Gastrocnemius medialis (tissue), 4 donors: ENCODE measurements at regions of chr6 and their contacts with region 1.

Region 1: GRCh38 chr6:32868257-32868788 is 14.3 kb downstream of the PSMB9 start:
- DNase-seq: peak; percentile 46 to 55
- ATAC-seq: peak; percentile 60 to 86
- H3K4me3 ChIP-seq: no peak overlapping the region
- H3K27ac ChIP-seq: no peak overlapping the region
- H3K4me1 ChIP-seq: no peaks in the 10 kb centered on the region
- H3K27me3 ChIP-seq: no peaks in the 10 kb centered on the region
- CTCF ChIP-seq: peak; percentile 88 to 95 (median 91)
- POLR2A ChIP-seq: no peak

Region 2: GRCh38 chr6:32413427-32414047 is 454.8 kb before region 1 on chr6:
- in situ Hi-C with region 1: no loop called
- intact Hi-C with region 1: loop called (anchors 5 kb)
- DNase-seq: peak; percentile 42 to 46
- ATAC-seq: peak; percentile 45 to 71
- H3K4me3 ChIP-seq: no peak overlapping the region
- H3K27ac ChIP-seq: no peak overlapping the region
- H3K4me1 ChIP-seq: peaks cover 0 to 3% of the 10 kb centered on the region in 2 donors
- H3K27me3 ChIP-seq: peaks cover 0 to 11% (median 6%) of the 10 kb centered on the region in 3 donors
- CTCF ChIP-seq: peak; percentile 64 to 94 (median 85)
- POLR2A ChIP-seq: no peak

Region 3: GRCh38 chr6:32825966-32826365 is 42.4 kb before region 1 on chr6:
- in situ Hi-C with region 1: loop called in 1 of 4 experiments (anchors 5 kb)
- intact Hi-C with region 1: loop called (anchors 5 kb)
- DNase-seq: no peak
- ATAC-seq: peak; percentile 56 to 81
- H3K4me3 ChIP-seq: no peak overlapping the region
- H3K27ac ChIP-seq: peak overlapping the region in 3 of 4 donors; percentile 3 to 27 (median 21)
- H3K4me1 ChIP-seq: no peaks in the 10 kb centered on the region
- H3K27me3 ChIP-seq: no peaks in the 10 kb centered on the region
- CTCF ChIP-seq: peak in 4 of 5 experiments; percentile 23 to 47 (median 30)
- POLR2A ChIP-seq: no peak

Region 4: DNA sequence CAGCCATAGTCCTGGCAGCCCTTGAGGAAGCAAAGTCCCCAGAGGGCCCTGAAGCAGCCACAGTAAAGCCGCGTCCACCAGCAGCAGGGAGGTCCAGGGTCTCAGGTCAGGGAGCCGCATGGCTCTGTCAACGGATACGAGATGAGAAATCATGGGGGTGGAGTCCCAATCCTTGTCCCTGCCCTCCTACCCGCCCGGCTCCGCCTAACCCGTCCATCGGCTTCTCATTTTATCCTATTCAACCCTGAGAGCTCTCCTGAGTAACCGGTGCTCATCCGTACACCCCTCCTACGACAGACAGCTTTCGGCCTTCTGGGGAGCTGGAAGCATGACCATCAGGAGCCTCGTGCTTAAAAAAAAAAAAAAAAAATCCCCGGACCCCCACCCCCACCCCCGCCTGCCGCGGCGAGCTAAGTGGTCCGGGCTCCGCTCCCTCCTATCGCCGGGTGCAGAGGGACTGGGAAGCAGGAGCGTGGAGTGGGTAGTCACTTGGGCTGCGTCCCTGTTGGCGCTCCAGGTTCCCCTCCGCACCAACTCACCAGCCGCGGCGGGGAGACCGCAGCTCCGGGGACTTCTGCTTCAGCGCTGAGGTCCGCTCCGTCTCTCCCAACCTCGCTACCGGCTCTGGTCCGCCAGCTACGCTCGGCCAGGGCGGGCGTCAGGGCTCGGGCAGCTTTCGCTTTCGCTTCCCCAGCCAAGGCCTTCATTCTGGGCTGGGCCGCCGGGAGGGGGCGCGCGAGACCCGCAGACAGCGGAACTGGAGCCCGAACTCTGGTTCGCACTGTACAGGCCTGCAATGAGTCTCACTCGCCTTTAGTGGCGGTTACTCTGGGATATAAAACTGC is 30.0 kb before region 1 on chr6 and contains the start of gene TAP2:
- in situ Hi-C with region 1: loop called in 1 of 4 experiments (anchors 5 kb)
- intact Hi-C with region 1: loop called (anchors 1 kb)
- DNase-seq: peak; percentile 87 to 92
- ATAC-seq: peak; percentile 91 to 95
- H3K4me3 ChIP-seq: peak within 1 kb of the TSS; percentile 66 to 86 (median 80)
- H3K27ac ChIP-seq: peak within 1 kb of the TSS; percentile 84 to 90 (median 90)
- H3K4me1 ChIP-seq: peaks cover 7% of the 10 kb centered on the region in 2 donors
- H3K27me3 ChIP-seq: no peaks in the 10 kb centered on the region
- CTCF ChIP-seq: peak; percentile 97 to 98 (median 98)
- POLR2A ChIP-seq: peak; percentile 24 to 44
- total RNA-seq, gene TAP2: 2.5 to 7.1 (median 4.1) TPM

Region 5: DNA sequence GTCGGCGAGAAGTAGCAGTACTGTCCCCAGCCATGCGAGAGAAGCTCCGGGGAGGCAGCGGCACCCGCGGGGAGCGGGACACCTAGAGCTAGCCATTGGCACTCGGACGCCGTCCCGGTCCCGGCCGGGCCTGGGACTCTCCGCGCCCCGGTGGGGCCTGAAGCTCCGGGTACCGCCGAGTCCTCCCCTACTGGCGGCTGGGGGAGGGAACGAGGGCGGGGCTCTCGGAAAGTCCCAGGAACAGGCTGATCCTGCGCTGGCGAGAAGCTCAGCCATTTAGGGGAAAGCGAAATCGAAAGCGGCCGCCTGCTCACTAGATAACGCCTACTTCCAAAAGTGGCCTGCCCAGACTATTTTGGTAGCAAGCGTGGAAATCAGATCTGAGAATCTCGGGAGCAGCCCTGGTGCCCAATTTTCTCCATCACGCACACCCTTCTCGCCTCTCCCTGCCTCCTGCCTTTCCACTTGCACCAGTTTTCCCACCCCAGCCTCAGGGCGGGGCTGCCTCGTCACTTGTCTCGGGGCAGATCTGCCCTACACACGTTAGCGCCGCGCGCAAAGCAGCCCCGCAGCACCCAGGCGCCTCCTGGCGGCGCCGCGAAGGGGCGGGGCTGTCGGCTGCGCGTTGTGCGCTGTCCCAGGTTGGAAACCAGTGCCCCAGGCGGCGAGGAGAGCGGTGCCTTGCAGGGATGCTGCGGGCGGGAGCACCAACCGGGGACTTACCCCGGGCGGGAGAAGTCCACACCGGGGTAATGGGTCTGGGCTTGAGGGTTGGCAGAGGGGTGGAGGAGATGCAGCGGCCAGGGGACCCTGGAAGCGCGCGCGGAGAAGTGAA is 14.6 kb before region 1 on chr6 and contains the starts of genes PSMB9 and TAP1:
- in situ Hi-C with region 1: no loop called
- intact Hi-C with region 1: loop called (anchors 1 kb)
- DNase-seq: peak; percentile 94 to 95
- ATAC-seq: peak; percentile 94 to 95
- H3K4me3 ChIP-seq: peak within 1 kb of the TSS; percentile 85 to 99 (median 96)
- H3K27ac ChIP-seq: peak within 1 kb of the TSS; percentile 98 to 99 (median 99)
- H3K4me1 ChIP-seq: peaks cover 12 to 19% of the 10 kb centered on the region in 2 donors
- H3K27me3 ChIP-seq: no peaks in the 10 kb centered on the region
- CTCF ChIP-seq: peak; percentile 83 to 90 (median 89)
- POLR2A ChIP-seq: peak; percentile 89 to 92
- total RNA-seq, gene PSMB9: 1.4 to 11.3 (median 6.1) TPM
- total RNA-seq, gene TAP1: 13.2 to 26.7 (median 19.0) TPM